ENCODE measurements at regions of chr1 and their contacts with region 1.

Region 1: GRCh38 chr1:17540255-17541001 is 930 bp downstream of the ARHGEF10L start:
- DNase-seq: peak in 1 of 2 donors; percentile 86
- H3K4me3 ChIP-seq: peak overlapping the region; percentile 69 to 97
- H3K27ac ChIP-seq: peak overlapping the region; percentile 98 to 100
- H3K4me1 ChIP-seq: peaks cover 12 to 49% of the 10 kb centered on the region in 2 donors
- H3K27me3 ChIP-seq: no peaks in the 10 kb centered on the region
- CTCF ChIP-seq: peak in 1 of 3 experiments; percentile 4

Region 2: GRCh38 chr1:17485280-17485679 is 55.1 kb before region 1 on chr1:
- intact Hi-C with region 1: no loop called
- DNase-seq: no peak
- H3K4me3 ChIP-seq: no peak overlapping the region
- H3K27ac ChIP-seq: no peak overlapping the region
- H3K4me1 ChIP-seq: no peaks in the 10 kb centered on the region
- H3K27me3 ChIP-seq: no peaks in the 10 kb centered on the region
- CTCF ChIP-seq: peak in 1 of 3 experiments; percentile 16

Region 3: GRCh38 chr1:17569200-17570161 is 29.1 kb after region 1 on chr1:
- intact Hi-C with region 1: loop called (anchors 2 kb)
- DNase-seq: peak; percentile 86 to 97
- H3K4me3 ChIP-seq: peak overlapping the region in 1 of 2 donors; percentile 22
- H3K27ac ChIP-seq: peak overlapping the region; percentile 95 to 98
- H3K4me1 ChIP-seq: peaks cover 46 to 83% of the 10 kb centered on the region in 2 donors
- H3K27me3 ChIP-seq: no peaks in the 10 kb centered on the region
- CTCF ChIP-seq: no peak